Right ventricle myocardium superior (tissue), 1 donor: ENCODE measurements at regions of chr7 and their contacts with region 1.

Region 1: GRCh38 chr7:132580717-132581285 is 4.5 kb upstream of the PLXNA4 start:
- DNase-seq: peak; percentile 58
- ATAC-seq: peak; percentile 64

Region 2: DNA sequence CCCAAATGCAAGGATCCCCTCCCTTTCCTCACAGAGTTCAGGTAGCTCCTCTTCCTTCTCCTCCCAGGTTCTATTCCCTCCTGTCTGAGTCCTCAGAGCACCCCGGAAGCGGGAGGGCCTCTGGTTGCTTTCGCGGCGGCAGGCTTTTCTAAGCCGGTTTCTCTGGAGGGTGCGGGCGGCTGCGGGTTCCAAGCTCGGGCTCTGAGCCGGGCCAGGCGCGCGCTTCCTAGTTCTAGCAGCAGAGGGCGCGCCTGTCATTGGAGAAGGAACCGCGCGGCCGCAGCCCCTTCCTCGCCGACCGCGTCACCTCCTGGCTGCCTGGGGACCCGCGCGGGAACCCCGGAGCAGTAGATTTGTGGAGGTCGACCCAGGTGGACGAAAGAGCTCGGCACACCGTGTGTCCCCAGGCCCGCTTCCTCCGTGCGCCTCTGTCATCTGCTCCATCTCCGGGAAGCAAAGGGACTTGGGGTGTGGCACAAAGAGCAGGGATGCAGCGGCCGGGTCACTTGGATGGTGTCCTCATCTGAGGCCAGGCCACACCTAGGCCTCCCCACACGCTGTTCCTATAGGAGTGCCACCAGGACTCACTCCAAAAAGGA is 635.4 kb before region 1 on chr7:
- intact Hi-C with region 1: loop called (anchors 5 kb)
- DNase-seq: peak; percentile 65
- ATAC-seq: peak; percentile 81

Region 3: DNA sequence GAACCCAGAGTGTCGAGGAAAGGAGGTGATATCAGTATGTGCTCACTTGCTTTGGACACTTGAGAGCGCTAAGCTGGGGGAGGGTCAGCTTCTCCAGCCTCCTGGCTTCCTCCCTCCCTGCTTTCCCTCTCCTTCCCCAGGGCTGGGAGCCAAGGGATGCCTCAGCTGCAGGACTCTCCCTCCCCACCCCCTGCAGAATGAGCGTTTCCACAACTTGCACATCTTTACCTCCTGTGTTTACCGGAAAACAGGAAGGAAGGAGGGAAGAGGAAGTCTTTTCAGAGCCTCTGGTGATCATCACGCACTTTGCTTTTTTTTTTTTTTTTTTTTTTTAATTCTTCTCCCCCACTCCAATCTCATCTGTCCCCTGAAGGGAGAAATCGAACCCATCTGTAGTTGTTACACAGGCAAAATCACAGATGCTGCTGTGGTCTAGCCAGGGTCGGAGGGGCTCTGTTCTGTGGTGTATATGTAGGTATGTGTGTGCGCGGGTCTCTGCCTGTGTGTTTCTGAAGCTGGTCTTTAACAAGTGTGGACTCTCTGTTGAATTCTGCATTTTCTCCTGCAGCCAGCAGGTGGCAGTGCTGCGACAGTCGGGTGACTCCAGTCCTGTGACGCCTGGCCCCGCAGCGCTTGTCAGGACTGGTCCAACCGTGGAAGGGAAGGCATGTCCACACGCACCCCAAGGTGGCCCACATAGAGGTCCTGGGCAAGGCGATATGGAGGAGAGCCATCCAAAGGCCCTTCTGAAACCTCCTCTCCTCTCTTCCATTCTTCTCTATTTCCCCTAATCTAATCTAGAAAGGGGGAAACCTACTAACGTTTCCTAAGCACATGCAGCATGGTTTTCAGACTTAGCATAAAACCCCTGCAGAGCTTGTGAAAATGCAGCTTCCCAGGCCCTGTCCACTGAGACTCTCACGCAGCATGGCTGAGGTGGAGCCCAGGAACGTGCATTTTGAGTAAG is 262.2 kb before region 1 on chr7:
- intact Hi-C with region 1: loop called (anchors 5 kb)
- DNase-seq: peak; percentile 88
- ATAC-seq: peak; percentile 96

Region 4: DNA sequence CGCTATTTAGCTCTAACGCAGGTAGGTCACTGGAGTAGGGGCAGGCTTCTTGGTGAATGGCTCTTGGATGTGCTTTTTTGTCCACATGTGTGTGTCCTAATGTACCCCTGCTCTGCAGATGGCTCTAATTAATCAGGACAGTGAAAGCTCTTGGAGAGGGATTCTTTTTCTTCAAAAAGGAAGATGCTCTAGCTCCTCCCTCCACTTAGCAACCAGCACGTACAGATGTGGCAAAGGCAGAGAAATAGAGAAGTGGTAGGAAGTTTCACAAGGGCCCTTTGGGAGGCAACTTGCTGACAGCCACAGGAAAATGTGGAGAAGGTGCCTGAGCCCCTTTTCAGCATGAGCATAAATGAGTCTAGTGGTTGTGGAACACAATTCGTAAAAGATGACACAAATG is 226.3 kb before region 1 on chr7:
- intact Hi-C with region 1: no loop called
- DNase-seq: no peak
- ATAC-seq: peak; percentile 11

Region 5: DNA sequence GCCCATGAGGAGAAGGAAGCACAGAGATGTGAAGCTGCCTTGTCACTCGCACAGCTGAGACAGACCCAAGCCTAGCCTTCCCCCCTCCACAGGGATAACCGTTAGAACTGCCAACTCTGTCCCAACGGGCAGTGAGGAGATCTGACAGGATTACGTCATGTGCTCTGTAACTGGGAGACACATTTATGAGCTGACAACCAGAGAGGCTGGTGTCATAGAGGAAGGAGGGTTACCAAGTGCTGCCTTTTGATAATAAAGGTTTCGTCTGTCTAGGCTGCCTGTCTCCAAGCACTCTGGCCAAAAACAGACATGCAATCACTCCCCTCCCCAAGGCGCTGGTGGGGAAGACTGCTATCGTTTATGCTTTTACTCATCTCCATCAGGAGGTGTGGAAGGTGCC is 170.4 kb before region 1 on chr7:
- intact Hi-C with region 1: loop called (anchors 10 kb)
- DNase-seq: peak; percentile 56
- ATAC-seq: peak; percentile 92

Region 6: GRCh38 chr7:132518102-132518838 is 62.5 kb before region 1 on chr7:
- intact Hi-C with region 1: loop called (anchors 10 kb)
- DNase-seq: no peak
- ATAC-seq: no peak

Region 7: DNA sequence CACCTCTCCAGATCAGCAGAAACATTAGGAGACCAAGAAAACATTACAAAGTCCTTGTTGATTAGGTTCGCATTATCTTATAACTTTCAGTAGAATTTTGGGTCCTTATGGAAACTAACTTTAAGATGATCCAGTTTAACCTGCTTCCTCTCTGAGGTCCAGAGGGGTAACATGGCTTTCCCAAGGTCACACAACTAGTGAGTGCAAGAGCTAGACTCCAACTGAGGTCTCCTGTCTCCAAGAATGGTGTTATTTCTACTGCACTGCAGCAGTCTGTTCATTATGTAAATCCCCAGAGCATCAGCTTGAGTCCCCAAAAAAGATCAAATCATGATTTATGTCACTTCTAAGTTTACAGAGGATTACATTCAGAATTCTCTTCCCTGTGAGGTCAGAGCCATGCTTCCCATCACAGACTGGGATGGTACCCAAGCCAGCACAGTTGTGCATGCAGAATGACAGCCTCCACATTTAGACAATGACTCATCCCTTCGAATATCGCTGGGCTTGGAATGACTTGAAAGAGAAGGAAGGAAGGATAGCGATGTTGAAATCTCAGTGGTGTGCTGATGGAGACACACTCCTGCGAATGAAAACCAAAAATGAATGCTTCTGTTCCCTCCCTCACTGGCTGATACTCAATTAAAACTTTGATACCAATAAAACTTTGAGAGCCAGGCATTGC is 158.6 kb after region 1 on chr7:
- intact Hi-C with region 1: no loop called
- DNase-seq: no peak
- ATAC-seq: peak; percentile 77